Cardiac septum (tissue), 1 donor: ENCODE measurements at regions of chr2 and their contacts with region 1.

Region 1: DNA sequence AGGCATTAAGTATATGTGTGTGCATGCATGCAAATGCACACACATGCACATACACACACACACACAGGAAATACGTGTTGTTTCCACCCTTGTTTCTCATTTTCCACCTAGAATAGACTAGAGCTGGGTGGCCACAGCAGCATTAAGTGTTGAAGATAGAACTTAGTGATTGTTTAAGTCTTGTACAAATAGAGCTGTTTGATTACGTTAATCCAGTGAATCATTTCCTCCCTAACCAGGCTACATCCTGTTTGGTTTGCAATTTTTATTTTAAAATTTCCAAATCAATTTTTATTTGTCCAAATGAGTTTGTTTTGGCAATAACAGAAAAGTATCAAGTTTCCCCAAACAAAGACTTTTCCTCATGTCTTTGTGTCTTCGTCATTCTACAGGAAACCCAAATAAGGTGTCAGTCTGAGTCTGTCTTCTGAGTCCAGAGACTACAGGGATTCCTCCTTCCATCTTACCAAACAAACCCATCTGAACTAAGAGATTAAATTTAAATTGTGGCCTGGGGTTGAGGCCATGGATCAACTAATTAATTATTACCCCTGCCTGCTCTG is 74.6 kb upstream of the GALNT5 start:
- DNase-seq: no peak

Region 2: DNA sequence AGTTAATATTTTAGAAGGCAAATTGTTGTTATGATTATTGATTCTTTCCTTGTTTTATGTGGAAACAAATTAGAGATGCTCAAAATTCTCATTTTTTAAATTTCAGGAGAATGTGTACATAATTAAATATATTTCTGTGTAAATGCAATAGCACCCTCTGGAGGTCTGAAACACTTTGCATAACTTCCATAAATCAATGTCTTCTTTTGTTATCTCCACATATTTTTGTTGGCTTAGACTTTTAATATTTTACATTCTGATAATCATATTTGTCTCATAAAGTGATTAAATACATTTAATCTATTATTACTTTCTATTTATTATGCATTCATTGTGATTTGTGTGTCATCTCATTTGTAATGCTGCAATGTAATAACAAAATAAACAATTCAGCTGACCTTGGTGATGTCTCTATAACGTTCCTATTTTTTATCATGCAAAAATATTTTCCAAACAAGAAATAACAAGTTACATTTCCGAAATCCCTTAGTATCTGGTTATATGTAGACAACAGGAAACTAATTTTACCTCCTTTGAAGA is 127.2 kb before region 1 on chr2:
- intact Hi-C with region 1: loop called (anchors 10 kb)
- DNase-seq: no peak